Caco-2 (cell line): ENCODE measurements at regions of chr2 and their contacts with region 1.

Region 1: DNA sequence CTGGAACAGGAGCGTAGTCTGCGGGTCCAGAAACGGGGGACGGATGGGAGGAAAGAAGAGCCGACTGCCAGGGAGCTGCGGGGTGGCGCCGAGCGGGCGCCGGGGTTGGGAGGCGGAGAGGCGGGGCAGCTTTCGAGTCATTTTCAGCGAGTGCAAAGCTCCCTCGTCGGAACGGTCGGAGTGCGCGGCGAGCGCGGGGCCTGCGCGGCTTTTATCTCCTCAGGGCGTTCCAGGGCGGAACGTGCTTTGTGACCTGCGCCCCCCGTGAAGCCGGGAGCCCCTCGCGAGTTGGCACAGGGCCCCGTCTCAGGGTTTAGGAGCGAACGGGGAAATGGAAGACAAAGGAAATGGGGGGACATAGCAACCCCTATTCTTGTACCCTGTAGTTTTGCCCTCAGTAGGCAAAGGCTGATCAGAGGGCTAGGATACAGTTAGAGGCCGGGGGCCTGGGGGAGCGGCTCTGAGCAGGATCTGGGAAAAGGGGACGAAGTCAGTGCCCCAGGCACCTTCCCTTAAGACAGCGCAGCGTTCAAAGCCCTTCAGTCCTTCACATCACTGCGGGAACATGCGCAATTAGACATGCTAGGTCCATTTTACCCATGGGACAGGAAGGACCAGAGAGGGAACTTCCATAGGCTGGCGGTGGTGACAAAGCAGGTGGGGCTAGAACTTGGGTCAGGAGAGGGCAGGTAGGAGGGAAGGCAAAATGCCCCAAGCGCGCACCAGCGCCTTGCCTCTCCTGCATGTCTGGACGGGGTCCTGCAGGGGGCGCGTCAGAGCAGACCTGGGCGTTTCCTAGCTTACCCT is 60.1 kb upstream of the IL1RL1 start:
- DNase-seq: no peak
- H3K4me3 ChIP-seq: no peak overlapping the region
- H3K4me3 Mint-ChIP-seq: peak overlapping the region; percentile 19
- H3K27ac Mint-ChIP-seq: no peak overlapping the region
- H3K4me1 ChIP-seq: no peaks in the 10 kb centered on the region
- H3K4me1 Mint-ChIP-seq: no peaks in the 10 kb centered on the region
- H3K27me3 ChIP-seq: no peaks in the 10 kb centered on the region
- H3K27me3 Mint-ChIP-seq: peaks cover 2% of the 10 kb centered on the region
- CTCF ChIP-seq: peak in 1 of 2 experiments; percentile 34

Region 2: GRCh38 chr2:101793277-101793969 is 457.8 kb before region 1 on chr2:
- CTCF ChIA-PET with region 1: no interaction called
- POLR2A ChIA-PET with region 1: no interaction called
- intact Hi-C with region 1: no loop called
- DNase-seq: peak in 1 of 2 experiments; percentile 30
- H3K4me3 ChIP-seq: no peak overlapping the region
- H3K4me3 Mint-ChIP-seq: no peak overlapping the region
- H3K27ac Mint-ChIP-seq: no peak overlapping the region
- H3K4me1 ChIP-seq: peaks cover 19% of the 10 kb centered on the region
- H3K4me1 Mint-ChIP-seq: peaks cover 26% of the 10 kb centered on the region
- H3K27me3 ChIP-seq: no peaks in the 10 kb centered on the region
- H3K27me3 Mint-ChIP-seq: no peaks in the 10 kb centered on the region
- CTCF ChIP-seq: peak in 1 of 2 experiments; percentile 37

Region 3: DNA sequence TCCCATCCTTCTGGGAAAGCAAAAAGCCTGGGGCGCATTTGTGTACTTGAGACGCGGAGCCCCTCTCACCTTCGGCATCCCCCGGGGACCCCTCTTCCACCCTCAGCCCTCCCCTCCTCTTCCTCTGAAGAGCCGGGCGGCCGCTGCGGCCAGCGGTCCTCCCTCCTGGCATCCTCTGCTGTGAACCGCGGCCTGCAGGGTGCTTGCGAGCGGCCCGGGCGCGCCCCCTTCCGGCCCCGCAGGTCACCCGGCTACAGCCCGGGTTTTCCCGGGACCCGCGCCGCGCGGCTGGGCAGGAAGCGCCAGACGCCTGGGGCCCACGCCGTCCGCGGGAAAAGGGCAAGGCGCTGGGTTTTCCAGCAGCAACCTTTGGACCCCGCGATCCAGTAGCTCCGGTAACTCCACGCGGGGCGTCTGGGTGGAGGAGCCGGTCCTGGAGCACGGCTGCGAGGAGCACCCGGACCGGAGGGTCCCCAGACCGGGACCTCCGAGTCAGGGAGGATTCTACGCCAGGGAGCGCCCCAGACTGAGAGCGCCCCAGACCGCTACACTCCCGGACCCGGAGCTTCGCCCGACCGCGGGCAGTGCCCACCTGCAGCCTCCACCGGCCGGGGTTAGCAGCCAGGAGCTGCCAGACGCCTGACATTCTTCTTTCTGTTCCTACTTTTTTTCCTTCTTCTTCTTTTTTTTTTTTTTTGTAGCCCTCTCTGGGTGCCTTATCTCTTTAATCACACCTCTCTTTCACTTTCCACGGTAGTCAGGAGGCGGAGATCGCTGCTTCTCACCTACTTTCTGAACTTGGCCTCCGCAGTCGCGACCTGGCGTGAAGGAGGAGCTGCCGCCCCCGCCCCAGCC is 104.5 kb after region 1 on chr2 and contains the start of gene IL18R1:
- CTCF ChIA-PET with region 1: no interaction called
- POLR2A ChIA-PET with region 1: no interaction called
- intact Hi-C with region 1: loop called (anchors 5 kb)
- DNase-seq: peak; percentile 62 to 86
- H3K4me3 ChIP-seq: peak within 1 kb of the TSS; percentile 39
- H3K4me3 Mint-ChIP-seq: peak within 1 kb of the TSS; percentile 79
- H3K27ac Mint-ChIP-seq: peak within 1 kb of the TSS; percentile 24
- H3K4me1 ChIP-seq: no peaks in the 10 kb centered on the region
- H3K4me1 Mint-ChIP-seq: peaks cover 5% of the 10 kb centered on the region
- H3K27me3 ChIP-seq: no peaks in the 10 kb centered on the region
- H3K27me3 Mint-ChIP-seq: peaks cover 16% of the 10 kb centered on the region
- CTCF ChIP-seq: peak; percentile 74 to 76
- total RNA-seq, gene IL18R1: not detected in 2 replicates